A673 (cell line): ENCODE measurements at regions of chrX and their contacts with region 1.

Region 1: GRCh38 chrX:41384041-41384705 is 50.2 kb downstream of the DDX3X start:
- DNase-seq: peak; percentile 22
- H3K4me3 ChIP-seq: no peak overlapping the region
- H3K27ac ChIP-seq: no peak overlapping the region
- H3K4me1 ChIP-seq: no peaks in the 10 kb centered on the region
- H3K27me3 ChIP-seq: no peaks in the 10 kb centered on the region
- CTCF ChIP-seq: no peak

Region 2: DNA sequence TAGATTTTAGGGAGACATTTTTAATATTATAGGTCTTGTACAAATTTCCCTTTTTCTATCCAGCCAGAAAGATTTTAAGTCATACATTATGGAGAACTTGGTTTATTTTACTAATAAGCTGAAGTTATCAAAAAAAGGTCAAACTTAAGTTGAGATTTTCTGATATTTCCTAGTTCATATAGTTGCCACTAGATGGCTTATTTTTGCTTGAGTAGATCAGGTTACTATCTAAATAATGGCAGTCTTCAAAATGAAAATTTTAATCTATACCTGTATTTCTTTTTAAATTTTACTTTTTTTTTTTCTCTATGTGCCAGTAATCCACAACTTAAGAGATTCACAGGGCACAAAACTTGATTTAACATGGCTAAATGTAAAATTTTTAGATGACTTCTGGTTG is 246.6 kb before region 1 on chrX:
- CTCF ChIA-PET with region 1: no interaction called
- POLR2A ChIA-PET with region 1: no interaction called
- intact Hi-C with region 1: no loop called
- DNase-seq: peak; percentile 19
- H3K4me3 ChIP-seq: no peak overlapping the region
- H3K27ac ChIP-seq: no peak overlapping the region
- H3K4me1 ChIP-seq: no peaks in the 10 kb centered on the region
- H3K27me3 ChIP-seq: no peaks in the 10 kb centered on the region
- CTCF ChIP-seq: peak; percentile 61

Region 3: DNA sequence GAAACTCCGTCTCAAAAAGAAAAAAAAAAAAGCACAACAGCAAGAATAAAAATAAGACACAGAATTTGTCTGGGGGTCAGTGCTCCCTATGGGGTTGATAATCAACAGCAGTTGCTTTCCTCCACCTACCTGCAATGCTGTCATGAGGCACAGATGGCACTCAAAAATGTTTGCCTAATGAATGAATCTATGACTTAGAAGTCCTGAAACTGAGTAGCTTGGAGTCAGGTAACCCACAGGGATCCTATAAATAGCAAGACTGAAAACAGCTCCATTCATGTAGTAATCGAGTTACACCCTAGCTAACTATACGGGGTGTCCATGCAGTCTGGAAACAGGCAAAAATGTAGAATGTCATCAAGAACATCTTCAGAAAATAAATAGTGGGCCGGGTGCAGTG is 70.0 kb before region 1 on chrX:
- CTCF ChIA-PET with region 1: no interaction called
- POLR2A ChIA-PET with region 1: interaction called, 14 read pairs
- intact Hi-C with region 1: no loop called
- DNase-seq: no peak
- H3K4me3 ChIP-seq: no peak overlapping the region
- H3K27ac ChIP-seq: no peak overlapping the region
- H3K4me1 ChIP-seq: no peaks in the 10 kb centered on the region
- H3K27me3 ChIP-seq: no peaks in the 10 kb centered on the region
- CTCF ChIP-seq: no peak